Sigmoid colon (tissue), 7 donors: ENCODE measurements at regions of chr15 and their contacts with region 1.

Region 1: DNA sequence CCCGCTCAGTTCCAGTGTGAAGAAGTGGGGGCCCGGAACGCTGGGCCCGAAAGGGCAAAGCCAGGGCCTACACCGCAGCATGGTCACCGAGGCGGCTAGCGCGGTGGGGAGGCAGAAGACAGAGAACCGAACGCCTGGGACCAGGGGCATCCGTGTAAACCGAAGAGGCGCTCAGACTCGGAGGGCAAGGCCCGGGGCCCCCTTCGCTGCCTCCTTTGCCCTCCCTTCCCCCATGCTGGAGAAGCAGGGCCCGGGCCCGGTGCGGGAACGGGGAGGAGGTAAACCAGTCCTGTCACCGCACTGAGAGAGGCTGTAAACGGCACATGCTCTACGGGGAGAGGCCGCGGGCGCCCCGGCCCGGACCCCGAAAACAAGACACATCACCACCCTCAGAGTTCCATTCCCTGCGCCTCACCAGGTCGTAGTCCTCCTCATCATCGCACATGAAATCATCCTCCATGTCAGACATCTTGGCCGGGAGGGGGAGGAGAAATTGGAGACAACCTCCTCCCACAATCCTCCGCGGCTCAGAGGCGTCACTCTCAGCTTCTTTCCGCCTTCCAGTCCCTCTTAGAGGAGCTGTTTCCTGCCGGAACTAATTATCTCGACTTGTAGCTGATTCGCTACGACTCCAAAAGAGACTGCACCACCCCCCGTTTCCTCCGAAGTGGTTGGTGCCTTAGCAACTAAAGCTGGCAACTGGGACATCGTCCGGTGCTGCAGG is at the start of gene COPS2:
- DNase-seq: peak; percentile 97
- H3K4me3 ChIP-seq: peak within 1 kb of the TSS; percentile 73 to 98 (median 88)
- H3K27ac ChIP-seq: peak within 1 kb of the TSS; percentile 86 to 97 (median 92)
- H3K4me1 ChIP-seq: peaks cover 0 to 48% (median 37%) of the 10 kb centered on the region in 4 donors
- H3K27me3 ChIP-seq: no peaks in the 10 kb centered on the region
- CTCF ChIP-seq: no peak
- EP300 ChIP-seq: peak in 2 of 4 donors; percentile 5 to 66
- POLR2A ChIP-seq: peak in 1 of 2 donors; percentile 38
- total RNA-seq, gene COPS2: 88.9 to 142 (median 98.5) TPM

Region 2: GRCh38 chr15:50145451-50145872 is 990.2 kb after region 1 on chr15:
- intact Hi-C with region 1: loop called (anchors 10 kb)
- DNase-seq: no peak
- H3K4me3 ChIP-seq: no peak overlapping the region
- H3K27ac ChIP-seq: no peak overlapping the region
- H3K4me1 ChIP-seq: peaks cover 0 to 15% (median 5%) of the 10 kb centered on the region in 4 donors
- H3K27me3 ChIP-seq: no peaks in the 10 kb centered on the region
- CTCF ChIP-seq: peak; percentile 43 to 62 (median 53)
- EP300 ChIP-seq: no peak
- POLR2A ChIP-seq: no peak